Activated CD4-positive, alpha-beta T cell treated with anti-CD3 and anti-CD28 coated beads, Interleukin-2, amount 10 ng/mL, durations not matched to agents 24 days and 14 days (primary cell): ENCODE measurements at regions of chr4 and their contacts with region 1.

Region 1: DNA sequence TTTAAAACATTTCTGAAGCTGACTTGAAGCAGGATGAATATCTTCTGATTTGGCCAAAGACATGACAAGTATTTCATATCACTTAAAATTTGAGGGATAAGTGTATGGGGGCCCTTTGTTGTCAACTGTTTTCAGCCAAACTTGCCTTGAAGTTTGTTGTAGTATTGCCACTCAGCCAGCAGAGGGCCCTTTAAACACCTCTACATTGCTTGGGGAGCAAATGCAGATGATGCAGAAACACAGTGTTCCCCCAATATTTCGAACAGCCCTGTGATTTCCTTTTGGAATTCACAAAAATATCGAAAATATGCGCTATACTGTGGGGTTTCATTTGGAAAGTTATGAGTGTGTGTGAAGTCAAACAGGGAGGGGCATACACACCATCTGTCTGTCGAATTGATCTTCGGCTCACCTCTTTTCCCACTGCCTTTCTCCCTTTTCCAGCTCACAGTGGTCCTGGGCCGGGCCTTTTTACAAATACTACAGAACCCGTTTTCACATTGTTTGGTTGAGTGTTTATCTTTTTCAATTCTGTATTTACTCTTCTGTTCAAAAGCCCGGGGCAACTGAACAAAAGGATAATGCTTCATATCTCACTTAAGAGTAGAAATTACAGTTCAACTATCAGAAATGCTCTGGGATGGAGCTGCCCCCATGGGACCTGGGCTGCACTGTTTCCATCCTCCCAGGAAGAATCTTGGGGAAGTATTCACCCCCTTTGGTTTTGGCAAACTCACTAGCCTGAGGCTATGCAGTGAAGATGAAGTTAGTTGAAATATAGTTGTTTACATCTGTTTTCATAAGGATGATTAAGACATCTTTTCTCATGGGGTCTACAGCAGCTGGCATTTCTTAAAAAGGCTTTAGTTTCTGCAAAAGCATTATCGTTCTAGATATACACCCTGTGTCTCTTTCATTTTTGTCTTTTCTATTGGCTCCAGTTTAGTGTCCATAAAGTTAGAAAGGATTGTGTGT is 137.6 kb downstream of the EGF start:
- DNase-seq: peak; percentile 86
- H3K4me3 Mint-ChIP-seq: no peak overlapping the region
- H3K27ac Mint-ChIP-seq: no peak overlapping the region
- H3K4me1 Mint-ChIP-seq: peaks cover 31% of the 10 kb centered on the region
- H3K27me3 Mint-ChIP-seq: no peaks in the 10 kb centered on the region

Region 2: GRCh38 chr4:110211007-110211769 is 160.9 kb after region 1 on chr4:
- intact Hi-C with region 1: loop called (anchors 1 kb)
- DNase-seq: peak; percentile 74
- H3K4me3 Mint-ChIP-seq: no peak overlapping the region
- H3K27ac Mint-ChIP-seq: no peak overlapping the region
- H3K4me1 Mint-ChIP-seq: peaks cover 5% of the 10 kb centered on the region
- H3K27me3 Mint-ChIP-seq: peaks cover 7% of the 10 kb centered on the region